HEK293 (cell line): ENCODE measurements at regions of chr2 and their contacts with region 1.

Region 1: DNA sequence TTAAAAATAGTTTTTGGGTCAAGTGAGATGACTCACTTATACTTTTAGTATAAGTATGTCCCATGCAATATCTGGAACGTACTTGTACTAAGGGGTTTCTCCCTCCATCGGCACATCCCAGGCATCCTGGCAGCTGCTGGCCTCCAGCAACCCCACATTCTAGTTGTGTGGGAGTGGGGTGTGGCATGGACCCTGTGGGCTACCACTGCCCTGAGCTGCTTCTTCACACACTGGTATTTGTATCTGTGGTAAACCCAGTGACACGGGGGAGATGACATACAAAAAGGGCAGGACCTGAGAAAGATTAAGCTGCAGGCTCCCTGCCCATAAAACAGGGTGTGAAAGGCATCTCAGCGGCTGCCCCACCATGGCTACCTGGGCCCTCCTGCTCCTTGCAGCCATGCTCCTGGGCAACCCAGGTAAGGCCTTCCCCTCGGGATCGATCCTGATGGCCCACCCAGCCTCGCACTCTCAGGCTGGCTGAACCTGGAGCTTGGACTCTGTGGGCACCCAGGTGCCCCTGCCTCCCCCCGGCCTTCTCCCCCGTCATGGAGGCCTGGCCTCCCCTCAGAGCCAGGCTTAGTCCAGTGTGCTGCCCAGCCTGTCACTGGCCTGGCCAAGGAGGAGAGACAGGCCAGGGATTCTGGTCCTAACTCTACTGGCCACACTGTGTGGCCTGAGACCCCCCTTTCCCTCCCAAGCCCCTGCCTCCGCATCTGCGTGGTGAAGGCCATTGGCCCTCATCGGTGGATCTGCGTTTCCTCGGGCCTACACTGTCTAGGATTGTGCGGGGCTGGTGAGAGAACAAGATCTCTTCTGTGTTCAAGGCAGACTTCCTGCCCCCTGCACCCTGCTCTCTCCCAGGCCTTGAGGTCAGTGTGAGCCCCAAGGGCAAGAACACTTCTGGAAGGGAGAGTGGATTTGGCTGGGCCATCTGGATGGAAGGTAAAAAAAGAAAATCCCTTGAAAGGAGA is at the start of gene GNLY:
- H3K4me3 ChIP-seq: no peak within 1 kb of the TSS
- H3K27ac ChIP-seq: no peak within 1 kb of the TSS
- H3K4me1 ChIP-seq: no peaks in the 10 kb centered on the region
- CTCF ChIP-seq: no peak

Region 2: GRCh38 chr2:85678794-85679672 is 15.3 kb before region 1 on chr2:
- CTCF ChIA-PET with region 1: interaction called, 12 read pairs
- POLR2A ChIA-PET with region 1: no interaction called
- H3K4me3 ChIP-seq: peak overlapping the region; percentile 13; the same call in 1 of the 2 replicates
- H3K27ac ChIP-seq: no peak overlapping the region
- H3K4me1 ChIP-seq: no peaks in the 10 kb centered on the region
- CTCF ChIP-seq: peak; percentile 90